Gastrocnemius medialis (tissue), 4 donors: ENCODE measurements at regions of chr12 and their contacts with region 1.

Region 1: GRCh38 chr12:50111693-50112455 is at the start of gene COX14:
- DNase-seq: peak; percentile 99
- ATAC-seq: peak; percentile 76 to 90
- H3K4me3 ChIP-seq: peak within 1 kb of the TSS; percentile 78 to 96 (median 87)
- H3K27ac ChIP-seq: peak within 1 kb of the TSS; percentile 92 to 95 (median 95)
- H3K4me1 ChIP-seq: peaks cover 67 to 83% of the 10 kb centered on the region in 2 donors
- H3K27me3 ChIP-seq: no peaks in the 10 kb centered on the region
- CTCF ChIP-seq: peak; percentile 70 to 98 (median 90)
- POLR2A ChIP-seq: peak; percentile 97 to 99
- total RNA-seq, gene COX14: 98.8 to 137 (median 106) TPM

Region 2: GRCh38 chr12:49740930-49741881 is 370.7 kb before region 1 on chr12 and contains the start of gene TMBIM6:
- in situ Hi-C with region 1: no loop called
- intact Hi-C with region 1: loop called (anchors 5 kb)
- DNase-seq: peak; percentile 100
- ATAC-seq: peak; percentile 98 to 99
- H3K4me3 ChIP-seq: peak within 1 kb of the TSS; percentile 80 to 100 (median 88)
- H3K27ac ChIP-seq: peak within 1 kb of the TSS; percentile 97 to 100 (median 98)
- H3K4me1 ChIP-seq: peaks cover 31 to 38% of the 10 kb centered on the region in 2 donors
- H3K27me3 ChIP-seq: no peaks in the 10 kb centered on the region
- CTCF ChIP-seq: peak; percentile 91 to 98 (median 95)
- POLR2A ChIP-seq: peak; percentile 98 to 99
- total RNA-seq, gene TMBIM6: 181 to 310 (median 224) TPM

Region 3: DNA sequence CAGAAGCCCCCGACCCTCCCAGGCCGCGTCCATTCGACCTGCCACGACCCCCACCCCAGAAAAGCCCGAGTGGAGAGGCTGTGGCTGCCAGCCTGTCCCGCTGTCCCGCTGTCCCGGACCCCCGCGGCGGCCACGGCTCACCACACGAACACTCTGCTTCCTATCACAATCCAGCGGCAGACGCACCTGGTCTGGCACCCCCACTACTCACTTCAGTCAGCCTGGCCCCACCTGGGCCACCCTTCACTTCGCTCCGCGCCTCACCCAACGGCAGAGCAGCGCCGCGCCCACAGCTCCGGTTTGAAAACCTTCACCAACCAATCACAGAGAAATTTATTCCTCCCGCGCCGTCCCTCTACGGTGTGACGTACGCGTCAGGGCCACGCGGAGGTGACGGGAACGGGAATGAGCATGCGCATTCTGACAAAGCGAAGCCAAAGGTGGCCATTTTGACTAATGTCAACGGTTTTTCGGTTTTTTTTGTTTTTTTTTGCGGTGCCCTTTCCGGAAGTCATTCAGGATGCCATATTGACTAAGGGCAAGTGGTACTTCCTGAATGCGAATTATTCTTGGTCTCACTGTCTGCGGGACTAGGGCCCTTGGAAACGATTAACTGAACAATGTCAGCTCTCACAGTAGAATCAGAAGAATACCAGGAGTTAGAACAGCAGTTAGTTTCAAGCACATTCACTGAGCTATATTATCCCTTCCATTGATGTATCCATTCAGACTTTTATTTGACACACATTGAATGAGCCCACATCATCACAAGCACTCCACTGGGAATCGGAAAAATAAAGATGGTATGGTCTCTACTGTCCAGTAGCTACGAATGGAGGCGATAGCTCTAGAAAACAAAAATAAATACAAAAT is 86.5 kb before region 1 on chr12 and contains the start of gene RACGAP1:
- in situ Hi-C with region 1: no loop called
- intact Hi-C with region 1: loop called (anchors 1 kb)
- DNase-seq: peak; percentile 94 to 95
- ATAC-seq: peak; percentile 99 to 100
- H3K4me3 ChIP-seq: peak within 1 kb of the TSS; percentile 61 to 77 (median 66)
- H3K27ac ChIP-seq: peak within 1 kb of the TSS; percentile 53 to 67 (median 59)
- H3K4me1 ChIP-seq: peaks cover 6 to 11% of the 10 kb centered on the region in 2 donors
- H3K27me3 ChIP-seq: no peaks in the 10 kb centered on the region
- CTCF ChIP-seq: no peak
- POLR2A ChIP-seq: peak in 1 of 2 donors; percentile 59
- total RNA-seq, gene RACGAP1: 5.6 to 13.3 (median 6.5) TPM

Region 4: GRCh38 chr12:50043854-50044253 is 68.0 kb before region 1 on chr12:
- in situ Hi-C with region 1: no loop called
- intact Hi-C with region 1: no loop called
- DNase-seq: no peak
- ATAC-seq: no peak
- H3K4me3 ChIP-seq: no peak overlapping the region
- H3K27ac ChIP-seq: no peak overlapping the region
- H3K4me1 ChIP-seq: no peaks in the 10 kb centered on the region
- H3K27me3 ChIP-seq: peaks cover 0 to 9% (median 4%) of the 10 kb centered on the region in 3 donors
- CTCF ChIP-seq: no peak
- POLR2A ChIP-seq: no peak

Region 5: GRCh38 chr12:50084775-50085614 is 26.9 kb before region 1 on chr12 and contains the start of gene SMARCD1:
- in situ Hi-C with region 1: no loop called
- intact Hi-C with region 1: loop called (anchors 1 kb)
- DNase-seq: peak; percentile 86 to 88
- ATAC-seq: peak; percentile 81 to 91
- H3K4me3 ChIP-seq: peak within 1 kb of the TSS; percentile 81 to 95 (median 88)
- H3K27ac ChIP-seq: peak within 1 kb of the TSS; percentile 92 to 99 (median 96)
- H3K4me1 ChIP-seq: peaks cover 13 to 14% of the 10 kb centered on the region in 2 donors
- H3K27me3 ChIP-seq: no peaks in the 10 kb centered on the region
- CTCF ChIP-seq: peak in 2 of 5 experiments; percentile 26 to 41
- POLR2A ChIP-seq: peak in 1 of 2 donors; percentile 37
- total RNA-seq, gene SMARCD1: 16.9 to 27.3 (median 20.1) TPM

Region 6: DNA sequence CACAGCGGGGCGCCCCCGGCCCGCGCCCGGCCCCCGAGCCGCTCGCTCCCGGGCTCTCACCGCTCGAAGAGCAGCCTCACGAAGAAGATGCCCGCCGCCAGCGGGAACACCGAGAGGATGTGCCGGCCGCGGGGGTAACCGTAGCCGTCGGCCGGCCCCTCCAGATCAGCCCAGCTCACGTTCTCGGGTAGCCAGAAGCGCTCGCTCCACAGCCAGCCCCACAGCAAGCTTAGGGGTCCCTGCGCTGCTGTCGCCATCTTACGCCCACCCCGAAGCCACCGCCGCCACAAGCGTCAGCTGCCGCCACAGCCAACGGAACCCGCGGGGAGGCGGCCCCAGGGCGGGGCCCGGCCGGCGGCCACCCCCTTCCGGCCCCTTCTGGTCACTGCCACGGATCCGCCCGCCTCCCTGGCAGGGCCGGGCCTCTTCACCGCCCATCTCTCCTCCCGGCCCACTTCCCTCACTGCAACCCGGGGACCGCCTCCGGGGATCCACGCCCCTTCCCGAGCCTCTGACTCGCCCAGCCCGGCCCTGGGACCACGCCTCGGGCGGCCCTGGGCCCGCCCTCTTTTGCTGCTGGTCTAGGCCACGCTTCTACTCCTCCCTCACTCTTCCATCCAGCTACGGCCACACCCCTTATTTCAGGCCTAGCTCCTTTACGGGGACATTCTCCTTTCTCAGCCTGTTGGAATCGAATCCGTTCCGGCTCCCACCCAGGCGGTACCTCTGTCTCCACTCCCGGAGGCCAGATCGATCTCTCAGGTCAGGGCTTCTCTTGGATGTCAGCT is 55.4 kb after region 1 on chr12 and contains the start of gene CERS5:
- in situ Hi-C with region 1: loop called in 1 of 4 experiments (anchors 10 kb)
- intact Hi-C with region 1: loop called (anchors 1 kb)
- DNase-seq: peak; percentile 97 to 98
- ATAC-seq: peak; percentile 96
- H3K4me3 ChIP-seq: peak within 1 kb of the TSS; percentile 74 to 99 (median 92)
- H3K27ac ChIP-seq: peak within 1 kb of the TSS; percentile 80 to 91 (median 87)
- H3K4me1 ChIP-seq: peaks cover 5 to 9% of the 10 kb centered on the region in 2 donors
- H3K27me3 ChIP-seq: no peaks in the 10 kb centered on the region
- CTCF ChIP-seq: peak in 4 of 5 experiments; percentile 13 to 49 (median 46)
- POLR2A ChIP-seq: peak; percentile 62 to 67
- total RNA-seq, gene CERS5: 5.4 to 9.2 (median 7.3) TPM

Region 7: GRCh38 chr12:50242751-50243191 is 130.9 kb after region 1 on chr12:
- in situ Hi-C with region 1: no loop called
- intact Hi-C with region 1: loop called (anchors 5 kb)
- DNase-seq: no peak
- ATAC-seq: no peak
- H3K4me3 ChIP-seq: no peak overlapping the region
- H3K27ac ChIP-seq: peak overlapping the region; percentile 80 to 86 (median 82)
- H3K4me1 ChIP-seq: peaks cover 46 to 57% of the 10 kb centered on the region in 2 donors
- H3K27me3 ChIP-seq: no peaks in the 10 kb centered on the region
- CTCF ChIP-seq: no peak
- POLR2A ChIP-seq: no peak

Region 8: DNA sequence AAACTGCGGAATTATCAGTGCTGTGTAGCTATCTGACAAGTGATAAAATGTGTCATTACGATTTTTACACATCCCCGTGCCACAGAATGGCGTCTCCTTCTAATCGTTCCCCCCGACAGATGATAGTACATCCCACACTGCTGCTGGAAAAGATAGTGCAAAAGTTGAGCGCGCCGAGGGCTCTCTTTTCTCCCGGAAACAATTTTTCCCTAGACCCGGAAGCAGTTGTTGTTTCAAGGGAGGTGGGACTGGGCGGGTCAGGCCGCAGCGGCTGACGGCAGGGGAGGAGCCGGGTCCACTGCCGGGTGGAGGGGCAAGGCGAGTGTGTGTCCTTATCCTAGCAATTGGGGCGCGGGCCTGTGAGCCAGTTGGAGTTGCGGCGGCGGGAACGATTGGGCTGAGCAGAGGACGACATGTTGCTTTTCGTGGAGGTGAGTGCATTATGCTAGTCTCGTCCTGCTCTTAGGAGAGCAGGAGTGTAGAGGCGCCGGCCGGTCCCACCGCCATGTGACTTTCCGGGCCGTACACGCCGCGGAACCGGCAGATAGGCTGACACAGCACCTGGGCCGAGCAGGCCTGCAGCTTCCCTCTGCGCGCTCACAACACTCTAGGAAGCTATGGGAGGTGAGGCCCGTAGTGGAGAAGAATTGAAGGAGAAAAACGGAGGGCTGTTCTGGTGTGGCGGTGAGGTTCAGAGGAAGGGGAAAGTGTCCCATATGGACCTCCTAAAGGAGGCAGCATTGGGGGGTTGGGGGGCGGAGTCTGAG is 288.9 kb after region 1 on chr12 and contains the start of gene LARP4:
- in situ Hi-C with region 1: no loop called
- intact Hi-C with region 1: loop called (anchors 5 kb)
- DNase-seq: peak; percentile 91 to 93
- ATAC-seq: peak; percentile 94 to 95
- H3K4me3 ChIP-seq: peak within 1 kb of the TSS; percentile 75 to 93 (median 83)
- H3K27ac ChIP-seq: peak within 1 kb of the TSS; percentile 92 to 98 (median 96)
- H3K4me1 ChIP-seq: peaks cover 20 to 24% of the 10 kb centered on the region in 2 donors
- H3K27me3 ChIP-seq: no peaks in the 10 kb centered on the region
- CTCF ChIP-seq: no peak
- POLR2A ChIP-seq: peak; percentile 95 to 96
- total RNA-seq, gene LARP4: 32.7 to 70.2 (median 42.4) TPM